HepG2 (cell line): ENCODE measurements at regions of chr12 and their contacts with region 1.

Region 1: DNA sequence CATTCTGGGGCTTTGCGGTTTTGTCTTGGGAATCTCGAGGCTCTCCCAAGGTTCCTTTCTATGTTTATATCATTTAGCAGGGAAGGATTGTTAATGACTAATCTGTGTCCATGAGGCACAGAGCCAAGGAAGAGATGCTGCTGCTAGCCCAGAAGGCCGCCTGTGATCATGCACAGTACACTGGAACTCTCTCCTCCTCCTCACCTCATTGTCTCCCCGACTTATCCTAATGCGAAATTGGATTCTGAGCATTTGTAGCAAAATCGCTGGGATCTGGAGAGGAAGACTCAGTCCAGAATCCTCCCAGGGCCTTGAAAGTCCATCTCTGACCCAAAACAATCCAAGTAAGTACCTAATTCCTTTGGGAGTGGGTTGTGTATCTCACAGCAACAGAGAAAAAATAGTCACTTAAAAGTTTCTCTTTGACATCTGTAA is at the start of gene NR1H4:
- DNase-seq: peak; percentile 32
- ATAC-seq: peak; percentile 71
- H3K4me3 ChIP-seq: peak within 1 kb of the TSS; percentile 69 to 88 (median 70)
- H3K27ac ChIP-seq: peak within 1 kb of the TSS; percentile 98
- H3K4me1 ChIP-seq: peaks cover 55% of the 10 kb centered on the region
- H3K27me3 ChIP-seq: no peaks in the 10 kb centered on the region
- CTCF ChIP-seq: no peak
- EP300 ChIP-seq: 0 out of 4 replicates have a peak, but pooled peaks of 1 of the 2 experiments have one; percentile 19
- POLR2A ChIP-seq: peak; percentile 62 to 76
- RAD21 ChIP-seq: no peak
- total RNA-seq, gene NR1H4: 114 and 147 TPM in 2 replicates

Region 2: GRCh38 chr12:100371146-100371545 is 102.6 kb before region 1 on chr12:
- CTCF ChIA-PET with region 1: no interaction called
- POLR2A ChIA-PET with region 1: no interaction called
- in situ Hi-C with region 1: no loop called
- intact Hi-C with region 1: no loop called
- DNase-seq: peak; percentile 28
- ATAC-seq: peak; percentile 79
- H3K4me3 ChIP-seq: no peak overlapping the region
- H3K27ac ChIP-seq: no peak overlapping the region
- H3K4me1 ChIP-seq: peaks cover 17% of the 10 kb centered on the region
- H3K27me3 ChIP-seq: no peaks in the 10 kb centered on the region; a peak in 1 of 5 replicates
- CTCF ChIP-seq: no peak
- EP300 ChIP-seq: no peak
- POLR2A ChIP-seq: no peak
- RAD21 ChIP-seq: no peak

Region 3: GRCh38 chr12:100404769-100405407 is 68.8 kb before region 1 on chr12:
- CTCF ChIA-PET with region 1: no interaction called
- POLR2A ChIA-PET with region 1: interaction called, 10 read pairs
- in situ Hi-C with region 1: no loop called
- intact Hi-C with region 1: loop called (anchors 2 kb)
- DNase-seq: peak; percentile 76
- ATAC-seq: peak; percentile 98
- H3K4me3 ChIP-seq: peak overlapping the region in 1 of 3 experiments; percentile 34; a peak in 2 of 6 replicates
- H3K27ac ChIP-seq: no peak overlapping the region
- H3K4me1 ChIP-seq: peaks cover 26% of the 10 kb centered on the region
- H3K27me3 ChIP-seq: no peaks in the 10 kb centered on the region
- CTCF ChIP-seq: peak; percentile 91
- EP300 ChIP-seq: no peak
- POLR2A ChIP-seq: no peak
- RAD21 ChIP-seq: peak; percentile 71

Region 4: GRCh38 chr12:100437038-100437841 is 36.5 kb before region 1 on chr12:
- CTCF ChIA-PET with region 1: no interaction called
- POLR2A ChIA-PET with region 1: interaction called, 50 read pairs
- in situ Hi-C with region 1: no loop called
- intact Hi-C with region 1: loop called (anchors 1 kb)
- DNase-seq: peak; percentile 97
- ATAC-seq: peak; percentile 95
- H3K4me3 ChIP-seq: peak overlapping the region in 1 of 3 experiments; percentile 14; a peak in 1 of 6 replicates
- H3K27ac ChIP-seq: peak overlapping the region; percentile 81
- H3K4me1 ChIP-seq: peaks cover 67% of the 10 kb centered on the region
- H3K27me3 ChIP-seq: no peaks in the 10 kb centered on the region; a peak in 1 of 5 replicates
- CTCF ChIP-seq: no peak
- EP300 ChIP-seq: peak; percentile 93 to 100
- POLR2A ChIP-seq: no peak
- RAD21 ChIP-seq: peak; percentile 25; the same call in 1 of the 2 replicates

Region 5: DNA sequence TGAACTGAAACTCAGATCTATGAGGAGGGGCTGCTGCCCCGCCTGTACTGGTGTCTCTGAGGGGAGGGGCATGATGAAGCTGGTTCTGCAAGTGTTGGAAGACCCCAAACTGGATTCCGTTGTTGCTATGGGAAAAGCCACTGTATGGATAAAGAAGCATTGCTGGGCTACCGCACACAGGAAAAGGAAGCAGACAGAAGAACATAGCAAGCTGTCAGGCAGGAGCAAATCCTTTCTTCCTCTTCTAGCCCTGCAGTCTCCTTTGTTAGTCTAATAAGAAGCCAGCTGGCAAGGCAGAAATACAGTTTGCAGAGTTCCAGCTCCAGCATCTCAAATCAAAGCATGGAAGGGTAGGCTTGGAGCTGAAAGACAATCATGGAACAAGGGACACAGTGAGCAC is 26.4 kb before region 1 on chr12:
- CTCF ChIA-PET with region 1: no interaction called
- POLR2A ChIA-PET with region 1: interaction called, 13 read pairs
- in situ Hi-C with region 1: no loop called
- intact Hi-C with region 1: no loop called
- DNase-seq: no peak
- ATAC-seq: no peak
- H3K4me3 ChIP-seq: no peak overlapping the region
- H3K27ac ChIP-seq: no peak overlapping the region
- H3K4me1 ChIP-seq: peaks cover 52% of the 10 kb centered on the region
- H3K27me3 ChIP-seq: no peaks in the 10 kb centered on the region
- CTCF ChIP-seq: no peak
- EP300 ChIP-seq: no peak
- POLR2A ChIP-seq: no peak
- RAD21 ChIP-seq: no peak

Region 6: DNA sequence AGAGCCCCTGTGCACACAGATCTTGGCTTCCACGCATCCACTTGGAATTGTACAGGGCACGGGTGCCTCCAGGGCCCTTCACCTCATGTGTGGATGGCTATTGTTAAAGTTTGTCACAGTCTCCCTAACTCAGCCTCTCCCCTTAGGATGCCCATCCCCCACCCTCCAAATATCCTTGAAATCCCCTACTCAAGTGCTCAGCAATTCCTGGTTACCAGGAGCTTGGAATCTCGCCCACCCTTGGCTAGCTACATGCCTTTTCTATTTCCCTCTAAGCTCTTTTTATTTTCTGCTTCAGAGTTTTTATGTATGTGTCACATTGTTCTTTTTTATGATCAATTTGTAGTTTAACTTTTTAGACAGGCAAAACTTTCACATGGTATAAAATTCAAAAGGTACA is 13.0 kb before region 1 on chr12:
- CTCF ChIA-PET with region 1: no interaction called
- POLR2A ChIA-PET with region 1: interaction called, 32 read pairs
- in situ Hi-C with region 1: no loop called
- intact Hi-C with region 1: loop called (anchors 1 kb)
- DNase-seq: no peak
- ATAC-seq: no peak
- H3K4me3 ChIP-seq: no peak overlapping the region
- H3K27ac ChIP-seq: no peak overlapping the region
- H3K4me1 ChIP-seq: peaks cover 43% of the 10 kb centered on the region
- H3K27me3 ChIP-seq: no peaks in the 10 kb centered on the region
- CTCF ChIP-seq: no peak
- EP300 ChIP-seq: no peak
- POLR2A ChIP-seq: no peak
- RAD21 ChIP-seq: no peak

Region 7: DNA sequence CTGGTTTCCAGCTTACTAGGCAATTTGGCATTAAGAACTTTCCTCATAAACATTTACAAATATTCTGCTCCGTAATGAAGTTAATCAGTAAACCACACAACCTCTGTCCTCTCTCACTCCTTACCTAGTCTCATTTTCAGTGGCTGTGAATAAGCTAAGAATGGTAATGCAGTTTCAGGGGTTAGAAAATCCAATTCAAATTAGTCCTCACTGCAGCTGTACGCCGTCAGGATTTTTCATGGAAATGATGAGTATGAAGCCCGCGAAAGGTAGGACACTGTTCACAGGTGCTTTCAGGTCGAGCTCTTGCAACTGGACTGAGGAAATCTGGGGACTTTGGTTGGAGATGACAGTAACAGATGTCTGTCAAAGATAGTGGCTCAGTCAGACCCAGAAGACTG is 29.5 kb after region 1 on chr12:
- CTCF ChIA-PET with region 1: no interaction called
- POLR2A ChIA-PET with region 1: no interaction called
- in situ Hi-C with region 1: no loop called
- intact Hi-C with region 1: no loop called
- DNase-seq: no peak
- ATAC-seq: peak; percentile 56; the same call in 2 of the 3 replicates
- H3K4me3 ChIP-seq: no peak overlapping the region
- H3K27ac ChIP-seq: peak overlapping the region; percentile 8
- H3K4me1 ChIP-seq: peaks cover 29% of the 10 kb centered on the region
- H3K27me3 ChIP-seq: no peaks in the 10 kb centered on the region
- CTCF ChIP-seq: no peak
- EP300 ChIP-seq: no peak
- POLR2A ChIP-seq: no peak
- RAD21 ChIP-seq: no peak

Region 8: DNA sequence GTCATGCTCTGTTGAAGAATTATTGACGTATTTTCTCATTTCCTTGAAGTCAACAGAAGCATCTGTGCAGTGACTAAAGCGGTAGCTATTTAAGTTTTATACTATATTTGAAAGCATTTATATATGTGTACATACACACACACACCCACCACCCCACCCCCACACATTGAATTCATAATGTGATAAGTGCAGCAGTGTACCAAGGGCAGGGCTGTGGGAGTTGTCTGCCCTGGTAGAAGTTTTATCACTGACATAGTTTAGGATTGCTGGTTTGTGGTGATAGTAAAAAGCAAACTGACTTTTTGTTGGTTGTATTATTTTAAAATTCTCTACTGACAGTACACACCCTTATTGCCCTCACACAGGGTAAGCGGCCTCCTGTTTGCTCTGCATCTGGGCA is 138.9 kb after region 1 on chr12:
- CTCF ChIA-PET with region 1: no interaction called
- POLR2A ChIA-PET with region 1: no interaction called
- in situ Hi-C with region 1: no loop called
- intact Hi-C with region 1: no loop called
- DNase-seq: no peak
- ATAC-seq: no peak
- H3K4me3 ChIP-seq: no peak overlapping the region
- H3K27ac ChIP-seq: no peak overlapping the region
- H3K4me1 ChIP-seq: no peaks in the 10 kb centered on the region
- H3K27me3 ChIP-seq: no peaks in the 10 kb centered on the region
- CTCF ChIP-seq: no peak
- EP300 ChIP-seq: no peak
- POLR2A ChIP-seq: no peak
- RAD21 ChIP-seq: no peak